Mammary epithelial cell (primary cell): ENCODE measurements at regions of chr1 and their contacts with region 1.

Region 1: DNA sequence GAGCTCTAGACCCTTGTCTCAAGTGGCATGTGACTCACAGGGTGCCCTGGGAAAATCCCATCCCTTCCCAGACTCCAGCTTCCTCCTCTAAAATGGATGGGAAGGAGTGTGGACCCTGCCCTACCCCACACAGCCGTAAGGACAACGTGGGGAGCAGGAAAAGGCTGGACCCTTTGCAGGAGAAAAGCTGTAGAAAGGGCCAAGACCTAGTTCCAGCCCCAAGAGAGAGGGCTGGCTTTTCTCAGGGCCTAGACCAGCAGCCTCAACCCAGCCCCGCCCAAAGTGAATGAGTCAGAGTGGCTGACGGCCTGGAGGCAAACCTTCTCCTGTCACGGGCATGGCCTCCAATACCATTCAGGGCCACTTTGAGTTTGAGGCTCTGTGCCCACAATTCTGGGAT is 1.1 kb downstream of the LAMB3 start:
- DNase-seq: peak; percentile 78
- H3K4me3 ChIP-seq: peak overlapping the region; percentile 71 to 91 (median 81)
- H3K27ac ChIP-seq: peak overlapping the region; percentile 100
- H3K4me1 ChIP-seq: peaks cover 52% of the 10 kb centered on the region
- H3K27me3 ChIP-seq: no peaks in the 10 kb centered on the region
- CTCF ChIP-seq: no peak

Region 2: DNA sequence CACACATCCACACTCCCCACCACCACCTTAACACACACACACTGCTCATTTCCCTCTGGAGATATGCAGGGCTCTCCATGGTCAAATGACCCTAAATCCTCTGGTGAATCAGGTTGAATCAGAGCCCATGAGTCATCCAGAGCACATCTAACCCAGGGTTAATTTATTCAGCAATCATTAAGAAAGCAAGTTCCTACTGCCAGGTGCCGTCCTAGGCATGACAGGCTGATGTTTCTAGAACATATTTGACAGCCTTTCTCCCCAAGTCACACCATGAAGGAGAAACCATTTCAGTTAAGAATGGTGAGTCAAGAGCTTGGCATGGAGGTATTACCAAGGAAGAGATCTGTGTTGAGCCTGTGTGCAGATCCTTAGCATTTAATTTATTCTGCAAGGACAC is 261.9 kb before region 1 on chr1:
- CTCF ChIA-PET with region 1: no interaction called
- dilution Hi-C with region 1: no loop called
- in situ Hi-C with region 1: no loop called
- intact Hi-C with region 1: loop called (anchors 10 kb)
- DNase-seq: peak; percentile 98
- H3K4me3 ChIP-seq: no peak overlapping the region
- H3K27ac ChIP-seq: peak overlapping the region; percentile 98
- H3K4me1 ChIP-seq: peaks cover 64% of the 10 kb centered on the region
- H3K27me3 ChIP-seq: no peaks in the 10 kb centered on the region
- CTCF ChIP-seq: no peak

Region 3: DNA sequence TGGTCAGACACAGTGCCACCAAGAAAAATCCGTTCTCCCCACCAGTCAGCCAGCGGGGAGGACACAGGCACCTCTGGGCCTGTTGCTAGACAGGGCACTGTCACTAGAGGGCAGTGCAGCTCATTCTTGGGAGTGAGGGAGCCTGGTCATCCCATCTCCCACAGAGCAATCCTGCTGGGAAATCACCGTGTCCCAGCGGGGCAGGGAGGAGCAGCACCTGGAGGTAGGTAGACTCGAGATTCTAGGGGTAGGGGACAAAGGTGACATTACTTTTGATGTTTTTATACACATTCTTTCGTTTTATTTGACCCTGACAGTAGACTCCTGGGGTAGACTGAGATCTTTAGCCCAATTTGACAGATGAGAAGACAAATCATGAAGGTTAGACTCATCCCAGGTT is 74.3 kb before region 1 on chr1:
- CTCF ChIA-PET with region 1: no interaction called
- dilution Hi-C with region 1: no loop called
- in situ Hi-C with region 1: no loop called
- intact Hi-C with region 1: loop called (anchors 2 kb)
- DNase-seq: peak; percentile 76
- H3K4me3 ChIP-seq: no peak overlapping the region
- H3K27ac ChIP-seq: no peak overlapping the region
- H3K4me1 ChIP-seq: peaks cover 9% of the 10 kb centered on the region
- H3K27me3 ChIP-seq: no peaks in the 10 kb centered on the region
- CTCF ChIP-seq: peak; percentile 98

Region 4: DNA sequence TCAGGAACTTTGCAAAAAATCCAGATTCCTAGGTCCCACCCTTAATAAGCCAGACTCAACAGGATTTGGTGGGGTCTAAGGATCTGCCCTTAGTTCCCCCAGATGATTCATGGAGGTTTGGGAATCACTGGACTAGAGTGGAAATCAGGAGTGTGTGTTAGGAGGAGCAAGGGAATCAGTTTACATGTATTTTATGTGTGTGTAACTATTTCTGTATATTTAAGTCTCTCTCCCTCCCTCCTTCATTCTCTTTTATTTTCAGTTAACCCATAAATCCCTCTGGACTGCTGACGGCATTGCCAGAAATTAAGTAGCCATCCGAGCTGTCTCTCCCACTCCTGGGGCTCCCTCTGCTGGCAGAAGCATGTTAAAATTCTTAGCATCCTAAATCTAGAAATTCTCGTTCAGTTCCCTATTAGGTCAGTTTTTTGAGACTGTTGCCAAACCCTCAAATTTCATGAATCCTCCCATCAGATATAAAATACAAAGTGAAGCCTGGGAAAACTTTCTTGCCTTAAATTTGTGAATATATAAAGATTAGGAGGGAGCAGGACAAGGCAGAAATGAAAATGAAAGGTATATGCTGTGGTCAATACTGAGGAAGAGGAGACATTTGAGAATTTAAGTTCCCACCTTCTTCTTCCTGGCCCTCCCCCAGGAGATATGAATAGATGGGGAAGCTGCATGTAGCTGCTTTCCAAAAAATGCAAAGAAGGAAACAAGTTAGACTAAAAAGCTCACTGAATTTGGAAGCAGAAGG is 41.8 kb after region 1 on chr1:
- CTCF ChIA-PET with region 1: no interaction called
- dilution Hi-C with region 1: no loop called
- in situ Hi-C with region 1: loop called (anchors 5 kb)
- intact Hi-C with region 1: loop called (anchors 1 kb)
- DNase-seq: peak; percentile 73
- H3K4me3 ChIP-seq: peak overlapping the region in 1 of 3 experiments; percentile 13
- H3K27ac ChIP-seq: peak overlapping the region; percentile 85
- H3K4me1 ChIP-seq: peaks cover 41% of the 10 kb centered on the region
- H3K27me3 ChIP-seq: no peaks in the 10 kb centered on the region
- CTCF ChIP-seq: peak; percentile 80 to 83

Region 5: DNA sequence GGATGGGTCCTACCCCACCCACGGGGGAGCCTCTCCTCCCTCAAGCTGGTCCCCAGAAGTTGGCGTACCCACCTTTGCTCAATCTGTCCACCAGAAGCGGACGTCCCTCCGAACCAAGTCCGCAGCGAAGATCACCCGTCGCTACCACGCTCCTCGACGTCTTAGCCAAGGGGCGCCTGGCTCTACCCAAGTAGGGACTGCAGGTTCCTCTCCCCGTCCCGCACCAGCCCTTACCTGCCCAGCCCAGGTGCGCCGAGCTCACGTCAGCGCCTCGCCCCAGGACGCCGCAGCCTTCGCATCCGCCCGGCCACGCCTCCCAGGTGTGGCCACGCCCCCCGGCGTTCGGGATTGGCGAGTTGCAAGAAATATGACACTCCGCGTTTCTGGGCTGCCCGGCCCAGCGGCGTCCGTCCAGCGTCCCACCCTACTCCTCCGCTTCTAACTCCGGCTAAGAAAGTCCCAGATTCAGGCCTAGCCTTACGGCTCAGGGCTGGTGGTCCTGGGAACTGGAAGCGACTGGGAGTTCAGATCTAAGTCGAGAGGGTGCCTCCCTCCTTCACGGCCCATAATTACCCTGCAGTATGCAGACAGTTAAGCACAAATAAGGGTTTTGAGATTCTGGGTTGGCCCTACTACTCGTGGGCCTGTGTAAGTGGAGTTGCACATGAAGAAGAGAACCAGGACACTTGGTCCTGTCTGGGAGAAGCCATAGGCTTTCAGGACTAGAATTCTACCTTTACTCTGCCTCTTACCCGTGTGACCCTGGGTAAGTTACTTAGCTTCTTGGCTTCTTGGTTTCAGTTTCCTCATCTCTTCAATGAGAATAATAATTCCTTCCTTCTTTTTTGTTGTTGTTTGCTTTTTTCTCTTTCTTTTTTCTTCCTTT is 155.0 kb after region 1 on chr1 and contains the start of gene IRF6:
- CTCF ChIA-PET with region 1: no interaction called
- dilution Hi-C with region 1: no loop called
- in situ Hi-C with region 1: no loop called
- intact Hi-C with region 1: loop called (anchors 5 kb)
- DNase-seq: peak; percentile 99
- H3K4me3 ChIP-seq: peak within 1 kb of the TSS; percentile 68 to 96 (median 77)
- H3K27ac ChIP-seq: peak within 1 kb of the TSS; percentile 99
- H3K4me1 ChIP-seq: peaks cover 63% of the 10 kb centered on the region
- H3K27me3 ChIP-seq: no peaks in the 10 kb centered on the region
- CTCF ChIP-seq: no peak
- total RNA-seq, gene IRF6: 261 to 422 TPM